ENCODE measurements at regions of chr2 and their contacts with region 1.

Region 1: DNA sequence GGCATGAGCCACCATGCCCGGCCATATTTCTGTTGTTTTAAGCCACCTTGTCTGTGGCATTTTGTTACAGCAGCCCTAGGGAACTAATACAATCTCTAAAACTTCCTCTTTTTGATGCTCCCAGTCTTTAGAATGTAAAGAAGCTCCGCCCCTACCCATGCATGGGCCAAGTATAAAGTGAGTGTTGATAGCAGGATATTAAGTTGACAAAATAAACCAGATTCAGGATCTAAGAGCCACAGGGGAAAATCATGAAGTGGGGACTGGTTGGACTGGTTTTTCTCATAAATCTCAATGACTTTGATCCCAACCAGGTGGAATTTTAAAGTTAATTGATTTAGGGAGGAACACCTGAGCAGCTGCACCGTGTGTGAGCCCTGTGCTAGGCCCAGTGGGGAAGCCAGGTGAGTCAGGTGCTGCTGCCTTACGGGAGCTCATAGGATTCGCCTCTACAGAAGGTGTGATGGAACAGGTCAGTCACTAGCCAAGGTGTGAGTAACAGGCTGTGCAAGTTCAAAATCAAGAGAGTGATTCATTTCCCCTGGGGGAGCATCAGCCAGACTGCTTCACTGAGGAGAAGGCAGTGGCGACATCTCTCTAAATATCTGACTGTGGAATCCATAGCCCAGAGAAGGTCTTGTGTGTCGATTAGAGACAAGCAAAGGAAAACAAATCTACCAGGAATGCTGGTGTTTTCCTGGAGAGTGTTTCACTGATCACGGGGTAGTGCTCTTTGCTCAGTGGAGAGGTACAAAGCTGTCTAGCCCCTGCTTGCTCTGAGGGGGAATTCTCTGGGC is 63.0 kb upstream of the MSH2 start:
- DNase-seq: no peak
- CTCF ChIP-seq: no peak

Region 2: DNA sequence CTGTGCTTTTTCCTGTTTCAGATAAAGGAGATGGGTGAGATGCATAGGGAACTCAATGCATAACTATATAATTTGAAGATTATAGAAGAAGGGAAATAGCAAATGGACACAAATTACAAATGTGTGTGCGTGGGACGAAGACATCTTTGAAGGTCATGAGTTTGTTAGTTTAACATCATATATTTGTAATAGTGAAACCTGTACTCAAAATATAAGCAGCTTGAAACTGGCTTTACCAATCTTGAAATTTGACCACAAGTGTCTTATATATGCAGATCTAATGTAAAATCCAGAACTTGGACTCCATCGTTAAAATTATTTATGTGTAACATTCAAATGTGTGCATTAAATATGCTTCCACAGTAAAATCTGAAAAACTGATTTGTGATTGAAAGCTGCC is 46.6 kb after region 1 on chr2:
- in situ Hi-C with region 1: loop called (anchors 5 kb)
- DNase-seq: peak; percentile 38
- CTCF ChIP-seq: no peak

Region 3: GRCh38 chr2:47771211-47771610 is 431.3 kb after region 1 on chr2:
- in situ Hi-C with region 1: loop called (anchors 10 kb)
- DNase-seq: no peak
- CTCF ChIP-seq: no peak